Sigmoid colon (tissue), 7 donors: ENCODE measurements at regions of chr2 and their contacts with region 1.

Region 1: GRCh38 chr2:138501425-138502283 is at the start of gene SPOPL:
- DNase-seq: peak; percentile 95
- H3K4me3 ChIP-seq: peak within 1 kb of the TSS; percentile 71 to 98 (median 95)
- H3K27ac ChIP-seq: peak within 1 kb of the TSS; percentile 90 to 95 (median 94)
- H3K4me1 ChIP-seq: peaks cover 0 to 51% (median 42%) of the 10 kb centered on the region in 4 donors
- H3K27me3 ChIP-seq: no peaks in the 10 kb centered on the region
- CTCF ChIP-seq: peak in 1 of 4 experiments; percentile 56
- EP300 ChIP-seq: no peak
- POLR2A ChIP-seq: peak; percentile 38 to 42
- total RNA-seq, gene SPOPL: 29.1 to 43.3 (median 37.5) TPM

Region 2: GRCh38 chr2:138572318-138572717 is 70.7 kb after region 1 on chr2:
- intact Hi-C with region 1: loop called (anchors 10 kb)
- DNase-seq: no peak
- H3K4me3 ChIP-seq: no peak overlapping the region
- H3K27ac ChIP-seq: no peak overlapping the region
- H3K4me1 ChIP-seq: no peaks in the 10 kb centered on the region
- H3K27me3 ChIP-seq: no peaks in the 10 kb centered on the region
- CTCF ChIP-seq: no peak
- EP300 ChIP-seq: no peak
- POLR2A ChIP-seq: no peak